ENCODE measurements at regions of chr15 and their contacts with region 1.

Region 1: GRCh38 chr15:95663146-95664100 is 667.1 kb upstream of the NR2F2 start:
- DNase-seq: peak; percentile 2
- H3K4me3 ChIP-seq: no peak overlapping the region
- H3K27ac ChIP-seq: no peak overlapping the region
- H3K4me1 ChIP-seq: no peaks in the 10 kb centered on the region
- H3K27me3 ChIP-seq: no peaks in the 10 kb centered on the region
- CTCF ChIP-seq: no peak

Region 2: GRCh38 chr15:95726891-95727290 is 63.5 kb after region 1 on chr15:
- CTCF ChIA-PET with region 1: no interaction called
- dilution Hi-C with region 1: loop called (anchors 5 kb)
- in situ Hi-C with region 1: no loop called
- intact Hi-C with region 1: no loop called
- DNase-seq: no peak
- H3K4me3 ChIP-seq: no peak overlapping the region
- H3K27ac ChIP-seq: no peak overlapping the region
- H3K4me1 ChIP-seq: no peaks in the 10 kb centered on the region
- H3K27me3 ChIP-seq: no peaks in the 10 kb centered on the region
- CTCF ChIP-seq: no peak

Region 3: GRCh38 chr15:95757171-95757570 is 93.7 kb after region 1 on chr15:
- CTCF ChIA-PET with region 1: no interaction called
- dilution Hi-C with region 1: no loop called
- in situ Hi-C with region 1: no loop called
- intact Hi-C with region 1: no loop called
- DNase-seq: no peak
- H3K4me3 ChIP-seq: no peak overlapping the region
- H3K27ac ChIP-seq: no peak overlapping the region
- H3K4me1 ChIP-seq: no peaks in the 10 kb centered on the region
- H3K27me3 ChIP-seq: no peaks in the 10 kb centered on the region
- CTCF ChIP-seq: no peak

Region 4: DNA sequence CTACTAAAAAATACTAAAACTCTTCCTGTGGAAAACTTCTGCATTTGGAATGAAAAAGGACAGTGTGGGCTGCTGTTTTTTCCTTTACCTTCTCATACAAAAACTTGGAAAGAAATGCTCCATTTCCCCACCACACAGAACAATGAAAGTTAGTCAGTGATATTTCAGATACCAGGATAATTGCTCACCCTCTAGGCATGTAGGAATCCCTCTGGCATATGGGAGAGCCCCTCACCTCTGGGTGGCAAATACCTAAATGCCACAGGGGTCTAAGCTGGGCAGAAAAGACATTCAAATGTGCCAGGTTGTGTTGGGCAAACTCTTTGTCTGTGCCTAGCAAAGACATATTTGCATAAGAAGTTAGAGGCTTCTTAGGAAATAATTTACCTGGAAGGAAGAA is 106.8 kb after region 1 on chr15:
- CTCF ChIA-PET with region 1: no interaction called
- dilution Hi-C with region 1: no loop called
- in situ Hi-C with region 1: no loop called
- intact Hi-C with region 1: no loop called
- DNase-seq: peak; percentile 56
- H3K4me3 ChIP-seq: no peak overlapping the region
- H3K27ac ChIP-seq: peak overlapping the region; percentile 32
- H3K4me1 ChIP-seq: peaks cover 5% of the 10 kb centered on the region
- H3K27me3 ChIP-seq: no peaks in the 10 kb centered on the region
- CTCF ChIP-seq: no peak

Measured in mammary epithelial cell (primary cell).